K562 (cell line): ENCODE measurements at regions of chr16 and their contacts with region 1.

Region 1: GRCh38 chr16:81723098-81723723 is 55.9 kb upstream of the PLCG2 start:
- DNase-seq: peak; percentile 60 to 87 (median 69)
- ATAC-seq: peak; percentile 92
- H3K4me3 ChIP-seq: no peak overlapping the region
- H3K27ac ChIP-seq: no peak overlapping the region
- H3K4me1 ChIP-seq: peaks cover 4 to 6% of the 10 kb centered on the region in 2 experiments; a peak in 3 of 5 replicates
- H3K27me3 ChIP-seq: peaks cover 8 to 24% of the 10 kb centered on the region in 2 experiments; a peak in 4 of 5 replicates
- CTCF ChIP-seq: peak; percentile 76 to 93 (median 85)
- EP300 ChIP-seq: no peak
- POLR2A ChIP-seq: no peak
- RAD21 ChIP-seq: peak; percentile 91 to 97

Region 2: GRCh38 chr16:81204798-81205680 is 518.2 kb before region 1 on chr16:
- CTCF ChIA-PET with region 1: no interaction called
- POLR2A ChIA-PET with region 1: no interaction called
- in situ Hi-C with region 1: no loop called
- intact Hi-C with region 1: loop called (anchors 5 kb)
- DNase-seq: peak; percentile 52 to 65 (median 58)
- ATAC-seq: peak; percentile 82
- H3K4me3 ChIP-seq: no peak overlapping the region
- H3K27ac ChIP-seq: no peak overlapping the region
- H3K4me1 ChIP-seq: no peaks in the 10 kb centered on the region; a peak in 1 of 5 replicates
- H3K27me3 ChIP-seq: peaks cover 28 to 49% of the 10 kb centered on the region in 2 experiments; a peak in 4 of 5 replicates
- CTCF ChIP-seq: peak; percentile 75 to 76 (median 75)
- EP300 ChIP-seq: no peak
- POLR2A ChIP-seq: no peak
- RAD21 ChIP-seq: peak; percentile 50 to 63

Region 3: DNA sequence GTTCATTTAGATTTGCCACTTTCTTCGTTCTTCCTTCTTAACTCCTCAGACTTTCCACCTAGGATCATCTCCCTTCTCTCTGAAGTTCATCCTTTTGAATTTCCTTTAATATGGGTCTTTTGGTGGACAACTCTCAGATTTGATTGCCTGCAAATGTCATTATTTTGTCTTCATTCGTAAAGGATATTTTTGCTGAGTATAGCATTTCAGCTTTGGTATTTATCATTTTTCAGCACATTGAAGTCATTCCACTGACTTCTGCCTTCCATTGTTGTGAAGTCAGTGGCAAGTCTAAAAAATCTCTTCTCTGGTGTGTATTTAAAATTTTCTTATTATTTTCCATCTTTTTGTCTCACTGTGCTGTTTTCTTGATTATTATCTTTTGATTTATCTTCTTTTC is 363.1 kb before region 1 on chr16:
- CTCF ChIA-PET with region 1: interaction called, 27 read pairs
- POLR2A ChIA-PET with region 1: no interaction called
- in situ Hi-C with region 1: loop called (anchors 5 kb)
- intact Hi-C with region 1: no loop called
- DNase-seq: no peak
- ATAC-seq: no peak
- H3K4me3 ChIP-seq: no peak overlapping the region
- H3K27ac ChIP-seq: no peak overlapping the region
- H3K4me1 ChIP-seq: no peaks in the 10 kb centered on the region
- H3K27me3 ChIP-seq: no peaks in the 10 kb centered on the region; a peak in 1 of 5 replicates
- CTCF ChIP-seq: no peak
- EP300 ChIP-seq: no peak
- POLR2A ChIP-seq: no peak
- RAD21 ChIP-seq: no peak

Region 4: GRCh38 chr16:81366316-81366932 is 356.8 kb before region 1 on chr16:
- CTCF ChIA-PET with region 1: interaction called, 27 read pairs
- POLR2A ChIA-PET with region 1: interaction called, 4 read pairs
- in situ Hi-C with region 1: loop called (anchors 5 kb)
- intact Hi-C with region 1: loop called (anchors 1 kb)
- DNase-seq: peak; percentile 52 to 63 (median 60)
- ATAC-seq: peak; percentile 84
- H3K4me3 ChIP-seq: no peak overlapping the region
- H3K27ac ChIP-seq: no peak overlapping the region
- H3K4me1 ChIP-seq: no peaks in the 10 kb centered on the region
- H3K27me3 ChIP-seq: no peaks in the 10 kb centered on the region
- CTCF ChIP-seq: peak; percentile 70 to 89 (median 74)
- EP300 ChIP-seq: no peak
- POLR2A ChIP-seq: no peak
- RAD21 ChIP-seq: peak; percentile 86 to 92

Region 5: GRCh38 chr16:81585785-81586184 is 137.4 kb before region 1 on chr16:
- CTCF ChIA-PET with region 1: no interaction called
- POLR2A ChIA-PET with region 1: interaction called, 4 read pairs
- in situ Hi-C with region 1: no loop called
- intact Hi-C with region 1: loop called (anchors 5 kb)
- DNase-seq: peak; percentile 42 to 73 (median 62)
- ATAC-seq: peak; percentile 66
- H3K4me3 ChIP-seq: no peak overlapping the region
- H3K27ac ChIP-seq: no peak overlapping the region
- H3K4me1 ChIP-seq: peaks cover 7 to 15% of the 10 kb centered on the region in 2 experiments; a peak in 4 of 5 replicates
- H3K27me3 ChIP-seq: no peaks in the 10 kb centered on the region
- CTCF ChIP-seq: peak; percentile 47 to 77 (median 68); a peak in 5 of 6 replicates
- EP300 ChIP-seq: no peak
- POLR2A ChIP-seq: no peak
- RAD21 ChIP-seq: peak in 1 of 2 experiments; percentile 31; a peak in 1 of 4 replicates

Region 6: DNA sequence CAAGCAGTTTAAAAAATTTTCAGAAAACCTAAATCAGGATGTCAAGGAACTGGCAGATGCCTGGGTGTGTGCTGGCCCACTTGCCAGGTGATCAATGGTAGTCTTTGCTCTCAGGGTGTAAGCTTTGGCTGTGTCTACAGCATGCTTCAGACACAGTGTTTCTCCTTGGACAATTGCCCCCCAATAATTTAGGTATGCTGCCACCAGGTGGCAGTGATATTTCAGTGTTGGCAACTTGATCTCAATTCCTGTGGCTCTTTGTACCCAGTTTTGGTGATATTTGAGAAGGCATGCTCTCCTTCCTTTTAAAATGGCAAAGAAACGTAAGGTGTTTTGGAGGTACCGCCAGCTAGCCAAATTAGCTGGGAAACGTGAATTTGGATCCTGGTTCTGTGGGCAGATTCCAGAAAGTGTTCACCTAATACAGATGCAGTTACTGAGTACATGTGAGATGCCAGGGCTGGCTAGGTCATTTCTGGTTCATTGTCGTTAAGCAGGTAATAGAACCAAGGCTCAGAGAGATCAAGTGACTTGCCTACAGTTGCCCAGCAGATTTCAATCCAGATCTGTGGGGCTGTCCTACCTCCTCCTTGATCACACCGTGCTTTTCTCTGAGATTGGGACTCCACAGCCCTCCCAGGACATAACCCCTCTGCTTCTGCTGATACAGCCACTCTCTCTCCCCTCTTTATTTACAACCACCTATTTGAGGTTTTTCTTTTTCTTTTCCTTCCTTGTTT is 99.7 kb before region 1 on chr16:
- CTCF ChIA-PET with region 1: interaction called, 32 read pairs
- POLR2A ChIA-PET with region 1: no interaction called
- in situ Hi-C with region 1: no loop called
- intact Hi-C with region 1: loop called (anchors 1 kb)
- DNase-seq: peak; percentile 51 to 81 (median 61)
- ATAC-seq: peak; percentile 32
- H3K4me3 ChIP-seq: no peak overlapping the region
- H3K27ac ChIP-seq: peak overlapping the region; percentile 3; the same call in 1 of the 3 replicates
- H3K4me1 ChIP-seq: peaks cover 35% of the 10 kb centered on the region in 2 experiments
- H3K27me3 ChIP-seq: no peaks in the 10 kb centered on the region
- CTCF ChIP-seq: peak; percentile 74 to 91 (median 82)
- EP300 ChIP-seq: no peak
- POLR2A ChIP-seq: no peak
- RAD21 ChIP-seq: peak; percentile 92 to 95

Region 7: GRCh38 chr16:81686391-81687130 is 36.6 kb before region 1 on chr16:
- CTCF ChIA-PET with region 1: no interaction called
- POLR2A ChIA-PET with region 1: no interaction called
- in situ Hi-C with region 1: no loop called
- intact Hi-C with region 1: no loop called
- DNase-seq: peak in 1 of 4 experiments; percentile 8
- ATAC-seq: no peak
- H3K4me3 ChIP-seq: no peak overlapping the region
- H3K27ac ChIP-seq: no peak overlapping the region
- H3K4me1 ChIP-seq: peaks cover 0 to 19% of the 10 kb centered on the region in 2 experiments; a peak in 3 of 5 replicates
- H3K27me3 ChIP-seq: no peaks in the 10 kb centered on the region
- CTCF ChIP-seq: no peak
- EP300 ChIP-seq: no peak
- POLR2A ChIP-seq: no peak
- RAD21 ChIP-seq: no peak

Region 8: GRCh38 chr16:81996664-81997622 is 273.7 kb after region 1 on chr16:
- CTCF ChIA-PET with region 1: no interaction called
- POLR2A ChIA-PET with region 1: no interaction called
- in situ Hi-C with region 1: no loop called
- intact Hi-C with region 1: no loop called
- DNase-seq: peak; percentile 39 to 47 (median 43)
- ATAC-seq: peak; percentile 80
- H3K4me3 ChIP-seq: no peak overlapping the region
- H3K27ac ChIP-seq: no peak overlapping the region
- H3K4me1 ChIP-seq: no peaks in the 10 kb centered on the region; a peak in 1 of 5 replicates
- H3K27me3 ChIP-seq: peaks cover 0 to 17% of the 10 kb centered on the region in 2 experiments; a peak in 3 of 5 replicates
- CTCF ChIP-seq: peak; percentile 28 to 56 (median 37); a peak in 4 of 6 replicates
- EP300 ChIP-seq: no peak
- POLR2A ChIP-seq: no peak
- RAD21 ChIP-seq: peak; percentile 44 to 56; a peak in 3 of 4 replicates

Region 9: DNA sequence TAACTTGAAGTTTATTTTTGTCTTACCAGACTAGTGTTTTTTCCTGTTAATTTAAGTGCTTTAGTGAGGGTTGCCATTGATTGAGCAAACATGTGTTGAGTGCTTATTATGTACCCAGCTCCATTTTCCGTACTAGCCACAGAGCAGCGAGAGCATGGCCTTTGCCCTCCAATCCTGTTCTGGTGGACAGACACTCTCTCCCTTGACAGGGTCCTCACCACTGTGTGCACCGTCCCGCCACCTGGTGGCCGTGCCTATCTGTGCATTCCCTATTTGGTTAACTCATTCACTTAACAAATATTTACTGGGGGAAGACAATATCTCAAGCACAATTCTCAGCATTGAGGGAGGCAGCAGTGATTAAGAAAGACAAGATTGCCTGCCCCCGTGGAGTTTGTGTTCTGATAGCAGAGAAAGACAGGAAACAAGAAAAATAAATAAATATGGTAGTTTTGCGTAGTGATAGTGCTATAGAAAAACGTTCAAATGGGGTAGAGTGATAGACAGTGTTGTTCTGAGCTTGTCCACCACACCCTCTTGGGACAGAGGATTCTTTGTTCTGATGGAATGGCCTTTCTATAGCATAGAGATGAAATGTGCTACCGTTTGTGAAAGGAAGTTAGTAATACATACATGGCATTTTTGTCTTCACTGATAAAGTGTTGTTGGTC is 916.6 kb after region 1 on chr16:
- CTCF ChIA-PET with region 1: no interaction called
- POLR2A ChIA-PET with region 1: no interaction called
- in situ Hi-C with region 1: no loop called
- intact Hi-C with region 1: no loop called
- DNase-seq: peak; percentile 46 to 63 (median 62)
- ATAC-seq: peak; percentile 86
- H3K4me3 ChIP-seq: no peak overlapping the region
- H3K27ac ChIP-seq: no peak overlapping the region
- H3K4me1 ChIP-seq: no peaks in the 10 kb centered on the region
- H3K27me3 ChIP-seq: peaks cover 0 to 4% of the 10 kb centered on the region in 2 experiments; a peak in 1 of 5 replicates
- CTCF ChIP-seq: peak; percentile 54 to 82 (median 66)
- EP300 ChIP-seq: no peak
- POLR2A ChIP-seq: no peak
- RAD21 ChIP-seq: peak; percentile 36 to 63